PC-3 (cell line): ENCODE measurements at regions of chr4 and their contacts with region 1.

Region 1: DNA sequence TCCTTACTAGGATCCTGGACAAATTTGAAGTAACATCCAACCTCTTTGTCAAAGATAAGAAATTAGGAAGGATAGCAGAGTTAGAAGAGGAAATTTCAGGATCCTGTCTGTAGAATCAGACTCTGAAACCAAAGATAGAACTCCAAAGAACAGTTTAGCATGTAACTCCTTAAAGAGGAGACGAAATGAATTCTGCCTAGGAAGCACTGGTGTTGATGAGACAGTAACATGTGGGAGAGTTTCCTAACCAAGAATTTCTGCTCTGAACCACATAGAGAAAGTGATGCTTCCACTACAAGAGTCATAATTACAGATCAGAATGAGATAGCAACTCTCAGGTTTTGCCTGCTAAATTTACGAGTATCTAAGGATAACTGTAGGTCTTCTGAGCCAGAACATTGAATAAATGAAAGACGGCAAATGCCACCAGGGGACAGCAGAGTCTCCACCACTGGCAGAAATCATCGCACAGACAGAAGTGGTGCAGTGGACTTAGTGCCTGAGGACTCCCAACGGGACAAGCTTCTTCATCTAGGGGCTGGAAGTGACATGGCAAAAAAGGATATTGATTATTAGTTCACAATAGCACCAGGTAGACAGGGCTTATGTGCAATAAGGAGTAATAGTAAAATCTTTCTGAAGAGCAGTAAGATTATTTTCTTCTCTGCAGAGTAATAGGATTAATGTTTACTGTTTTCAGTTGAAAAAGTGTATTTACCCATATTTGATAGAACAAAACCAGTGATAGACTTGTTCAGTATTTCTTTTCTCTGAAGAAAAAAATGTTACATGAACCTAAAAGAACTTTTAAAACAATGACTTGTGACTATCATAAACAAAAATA is 6.7 kb upstream of the PPID start:
- DNase-seq: peak; percentile 74
- ATAC-seq: peak; percentile 92
- H3K4me3 ChIP-seq: no peak overlapping the region
- H3K27ac ChIP-seq: no peak overlapping the region
- H3K4me1 ChIP-seq: no peaks in the 10 kb centered on the region
- H3K27me3 ChIP-seq: no peaks in the 10 kb centered on the region
- CTCF ChIP-seq: peak; percentile 87

Region 2: DNA sequence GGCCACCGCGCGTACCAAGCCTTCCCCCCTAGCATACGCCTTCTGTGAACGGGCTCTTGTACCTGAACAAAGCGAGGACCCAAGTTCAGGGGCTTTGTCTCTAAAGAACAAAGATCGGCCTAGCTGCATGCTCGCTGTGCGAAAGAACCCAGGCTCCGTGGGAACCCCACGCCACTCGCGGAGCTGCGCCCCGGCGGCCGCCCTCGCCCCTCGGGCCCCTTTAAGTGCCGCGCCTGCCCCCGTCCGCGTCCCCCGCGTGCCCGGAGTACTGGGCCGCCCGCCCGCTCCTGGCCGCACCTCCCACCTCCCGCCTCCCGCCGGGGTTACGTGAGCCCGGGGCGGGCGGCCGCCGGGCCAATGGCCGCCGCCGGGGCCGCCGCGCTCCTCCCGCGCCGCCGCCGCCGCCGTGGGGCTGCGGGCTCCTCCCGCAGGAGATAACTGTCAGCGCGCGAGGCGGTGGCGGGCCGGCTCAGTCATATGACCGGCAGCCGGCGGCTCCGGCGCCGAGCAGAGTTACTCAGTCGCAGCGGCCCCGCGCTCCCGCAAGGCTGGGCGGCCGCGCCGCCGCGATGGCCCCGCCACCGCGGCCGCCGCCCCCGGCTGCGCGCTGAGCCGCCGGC is 38.7 kb after region 1 on chr4 and contains the start of gene FNIP2:
- CTCF ChIA-PET with region 1: no interaction called
- POLR2A ChIA-PET with region 1: no interaction called
- intact Hi-C with region 1: loop called (anchors 5 kb)
- DNase-seq: peak; percentile 64
- ATAC-seq: peak; percentile 84
- H3K4me3 ChIP-seq: peak within 1 kb of the TSS; percentile 96
- H3K27ac ChIP-seq: 0 out of 2 replicates have a peak within 1 kb of the TSS, but pooled peaks have one; percentile 10
- H3K4me1 ChIP-seq: peaks cover 22% of the 10 kb centered on the region
- H3K27me3 ChIP-seq: no peaks in the 10 kb centered on the region
- CTCF ChIP-seq: no peak
- total RNA-seq, gene FNIP2: 5.2 and 6.7 TPM in 2 replicates

Region 3: GRCh38 chr4:158850800-158851644 is 121.1 kb after region 1 on chr4:
- CTCF ChIA-PET with region 1: no interaction called
- POLR2A ChIA-PET with region 1: no interaction called
- intact Hi-C with region 1: loop called (anchors 1 kb)
- DNase-seq: peak; percentile 61
- ATAC-seq: no peak
- H3K4me3 ChIP-seq: no peak overlapping the region
- H3K27ac ChIP-seq: no peak overlapping the region
- H3K4me1 ChIP-seq: no peaks in the 10 kb centered on the region
- H3K27me3 ChIP-seq: no peaks in the 10 kb centered on the region
- CTCF ChIP-seq: peak; percentile 66

Region 4: DNA sequence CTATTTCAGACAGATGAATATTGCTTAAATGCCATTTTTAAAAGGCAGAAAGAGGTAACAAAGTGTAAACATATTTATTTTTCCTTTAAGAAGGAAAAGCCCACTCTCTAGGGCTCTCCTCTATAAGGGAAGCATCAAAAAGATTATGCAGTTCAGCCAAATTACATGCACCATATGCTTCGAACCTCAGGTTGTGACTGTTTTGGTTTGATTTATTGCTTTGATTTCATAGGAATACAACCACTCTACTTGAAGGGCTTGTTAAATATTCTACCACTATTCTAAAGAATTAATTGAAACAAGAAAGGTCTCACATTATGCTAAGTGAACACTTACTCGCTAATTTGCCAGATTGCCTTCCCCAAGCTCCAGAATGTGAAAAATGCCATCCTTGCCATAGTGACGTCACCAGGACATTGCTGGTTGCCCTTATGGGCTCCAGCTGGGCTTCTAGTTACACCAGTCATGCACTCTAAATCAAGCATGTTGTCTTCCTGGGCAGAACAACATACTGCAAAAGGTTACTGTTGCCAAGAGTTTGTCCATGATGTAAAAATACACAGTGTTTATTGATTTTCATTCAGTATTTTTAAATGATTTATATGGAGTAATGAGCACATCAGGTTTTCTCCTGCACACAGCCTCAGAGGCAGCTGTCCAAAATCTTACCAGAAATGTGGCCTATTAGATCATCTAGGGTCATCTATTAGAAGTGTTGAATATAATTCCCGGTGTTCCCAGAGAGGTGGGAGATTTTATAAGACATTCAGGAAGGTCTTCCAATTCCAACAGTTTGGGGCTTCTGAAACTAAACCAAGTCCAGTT is 208.5 kb after region 1 on chr4:
- CTCF ChIA-PET with region 1: no interaction called
- POLR2A ChIA-PET with region 1: no interaction called
- intact Hi-C with region 1: no loop called
- DNase-seq: no peak
- ATAC-seq: no peak
- H3K4me3 ChIP-seq: no peak overlapping the region
- H3K27ac ChIP-seq: no peak overlapping the region
- H3K4me1 ChIP-seq: no peaks in the 10 kb centered on the region
- H3K27me3 ChIP-seq: no peaks in the 10 kb centered on the region
- CTCF ChIP-seq: no peak

Region 5: DNA sequence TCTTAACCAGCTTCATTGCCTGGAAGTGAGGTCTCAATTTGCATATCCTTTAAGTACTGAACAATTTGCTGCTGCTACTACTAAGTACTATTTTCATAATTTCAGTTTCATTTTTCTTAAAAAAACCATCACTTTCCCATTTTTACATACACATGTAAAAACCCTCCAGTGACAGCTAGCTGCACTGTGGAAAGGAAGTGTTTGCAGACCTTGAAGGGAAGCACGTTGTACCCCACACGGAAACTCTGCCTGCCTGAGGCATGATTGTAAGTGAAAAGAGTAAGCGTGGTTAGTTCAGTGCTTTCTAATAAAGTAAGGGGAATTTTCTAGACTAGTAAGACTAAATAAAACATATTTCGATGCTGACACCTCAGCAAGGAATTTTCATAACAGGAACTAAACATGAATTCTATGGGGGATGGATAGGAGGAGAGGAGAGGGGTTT is 476.5 kb after region 1 on chr4:
- CTCF ChIA-PET with region 1: no interaction called
- POLR2A ChIA-PET with region 1: no interaction called
- intact Hi-C with region 1: loop called (anchors 2 kb)
- DNase-seq: peak; percentile 35
- ATAC-seq: peak; percentile 57
- H3K4me3 ChIP-seq: no peak overlapping the region
- H3K27ac ChIP-seq: no peak overlapping the region; the same call in 1 of the 2 replicates
- H3K4me1 ChIP-seq: peaks cover 12% of the 10 kb centered on the region
- H3K27me3 ChIP-seq: no peaks in the 10 kb centered on the region
- CTCF ChIP-seq: no peak

Region 6: DNA sequence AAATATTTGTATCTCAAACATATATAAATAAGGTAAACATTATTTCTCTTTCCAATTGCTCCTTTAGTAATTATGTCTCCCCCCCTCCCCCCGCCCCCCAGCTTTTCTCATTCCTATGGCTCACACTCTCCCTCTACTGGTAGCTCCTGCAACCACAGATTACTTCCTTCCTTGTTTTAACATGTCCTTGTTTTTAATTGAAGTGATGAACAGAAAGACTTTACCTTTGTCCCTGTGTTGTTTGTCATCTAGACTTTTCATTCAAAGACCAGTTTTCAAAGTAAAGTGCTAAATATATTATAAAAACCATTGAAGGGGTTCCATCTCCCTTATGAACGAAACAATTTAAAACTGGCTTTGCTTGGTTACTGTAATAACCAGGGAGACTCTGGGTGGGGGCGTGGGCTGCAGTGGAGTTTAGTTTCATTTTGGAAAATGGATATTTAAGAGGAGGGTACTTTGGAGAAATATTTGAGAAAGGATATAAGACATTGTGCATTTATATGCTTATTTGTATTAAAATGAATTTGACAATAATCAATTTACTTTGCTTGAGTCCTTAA is 725.8 kb after region 1 on chr4:
- CTCF ChIA-PET with region 1: no interaction called
- POLR2A ChIA-PET with region 1: no interaction called
- intact Hi-C with region 1: loop called (anchors 10 kb)
- DNase-seq: peak; percentile 66
- ATAC-seq: peak; percentile 50
- H3K4me3 ChIP-seq: peak overlapping the region; percentile 50; the same call in 1 of the 2 replicates
- H3K27ac ChIP-seq: no peak overlapping the region
- H3K4me1 ChIP-seq: peaks cover 3% of the 10 kb centered on the region; the same call in 1 of the 2 replicates
- H3K27me3 ChIP-seq: no peaks in the 10 kb centered on the region
- CTCF ChIP-seq: peak; percentile 79